ENCODE measurements at regions of chr2 and their contacts with region 1.

Region 1: DNA sequence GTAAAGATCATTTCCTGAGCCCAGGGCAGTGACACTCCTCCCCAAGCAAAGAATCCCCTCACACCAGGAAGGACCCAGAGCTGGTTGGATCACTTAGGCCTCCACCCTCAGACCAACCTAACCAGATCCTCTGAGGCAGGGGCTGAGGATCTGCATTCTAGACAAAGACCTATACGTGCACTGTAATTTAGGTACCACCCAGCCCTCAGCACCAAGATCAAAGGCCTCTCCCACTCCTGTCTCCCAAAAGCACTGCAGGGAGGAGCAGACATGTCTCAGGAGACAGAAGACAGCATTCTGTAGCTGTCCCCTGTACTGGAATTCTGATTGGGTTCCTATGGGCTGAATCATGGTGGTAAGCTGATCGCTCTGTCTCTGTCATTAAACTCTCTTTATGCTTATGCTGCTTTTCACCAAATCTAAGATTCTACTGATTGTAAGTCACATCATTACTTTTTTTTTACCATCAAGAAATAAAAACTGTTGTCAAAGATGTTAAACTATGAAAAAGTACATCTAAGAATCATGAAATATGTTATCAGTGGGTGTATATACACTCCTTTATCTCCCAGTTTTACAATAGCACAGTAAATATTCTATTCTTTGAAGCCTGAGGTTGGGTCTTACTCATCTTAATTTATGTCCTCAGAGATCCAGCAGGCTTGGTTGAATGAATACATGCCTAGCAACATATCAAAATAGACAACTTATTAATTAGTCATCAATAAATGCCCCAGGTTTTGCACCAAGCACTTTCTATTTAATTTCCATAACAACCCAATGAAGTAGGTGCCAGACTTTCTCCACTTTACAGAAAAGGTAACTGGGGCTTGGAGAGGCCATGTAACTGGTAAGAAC is 28.3 kb downstream of the MCFD2 start:
- DNase-seq: no peak
- ATAC-seq: no peak
- H3K4me3 ChIP-seq: no peak overlapping the region
- H3K27ac ChIP-seq: no peak overlapping the region
- H3K4me1 ChIP-seq: no peaks in the 10 kb centered on the region
- H3K27me3 ChIP-seq: peaks cover 14 to 36% of the 10 kb centered on the region in 2 experiments
- CTCF ChIP-seq: no peak
- EP300 ChIP-seq: no peak
- POLR2A ChIP-seq: no peak
- RAD21 ChIP-seq: no peak

Region 2: DNA sequence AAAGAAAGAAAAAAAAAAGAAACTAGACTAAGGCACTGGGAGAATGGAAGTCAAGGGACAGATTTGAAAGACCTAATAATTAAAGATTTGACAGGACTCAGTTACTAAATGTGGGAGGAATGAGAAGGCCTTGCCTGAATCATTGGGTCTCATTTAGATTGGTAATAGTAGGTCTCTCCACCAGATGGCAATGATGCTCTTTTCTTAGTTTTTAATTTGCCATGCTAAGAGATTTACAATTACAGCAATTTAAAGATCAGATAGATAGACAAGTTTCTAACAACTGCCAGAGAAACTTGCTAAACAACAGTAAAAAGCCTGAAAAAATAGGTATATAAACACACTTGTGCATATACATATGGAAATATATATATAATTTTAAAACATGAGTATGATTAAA is 254.9 kb before region 1 on chr2:
- CTCF ChIA-PET with region 1: interaction called, 12 read pairs
- POLR2A ChIA-PET with region 1: no interaction called
- in situ Hi-C with region 1: no loop called
- intact Hi-C with region 1: loop called (anchors 5 kb)
- DNase-seq: peak; percentile 14 to 23 (median 18)
- ATAC-seq: peak; percentile 64; the same call in 2 of the 3 replicates
- H3K4me3 ChIP-seq: no peak overlapping the region
- H3K27ac ChIP-seq: no peak overlapping the region
- H3K4me1 ChIP-seq: no peaks in the 10 kb centered on the region
- H3K27me3 ChIP-seq: no peaks in the 10 kb centered on the region
- CTCF ChIP-seq: peak; percentile 33 to 50 (median 35); a peak in 3 of 6 replicates
- EP300 ChIP-seq: no peak
- POLR2A ChIP-seq: no peak
- RAD21 ChIP-seq: peak; percentile 47 to 66

Region 3: GRCh38 chr2:46657042-46657504 is 230.2 kb before region 1 on chr2:
- CTCF ChIA-PET with region 1: no interaction called
- POLR2A ChIA-PET with region 1: no interaction called
- in situ Hi-C with region 1: loop called (anchors 5 kb)
- intact Hi-C with region 1: loop called (anchors 1 kb)
- DNase-seq: peak; percentile 17 to 38 (median 32)
- ATAC-seq: peak; percentile 79
- H3K4me3 ChIP-seq: no peak overlapping the region
- H3K27ac ChIP-seq: no peak overlapping the region
- H3K4me1 ChIP-seq: no peaks in the 10 kb centered on the region
- H3K27me3 ChIP-seq: peaks cover 11 to 22% of the 10 kb centered on the region in 2 experiments; a peak in 3 of 5 replicates
- CTCF ChIP-seq: peak; percentile 40 to 66 (median 48); a peak in 5 of 6 replicates
- EP300 ChIP-seq: no peak
- POLR2A ChIP-seq: no peak
- RAD21 ChIP-seq: peak; percentile 37 to 61; a peak in 3 of 4 replicates

Measured in K562 (cell line).